GM10248 (cell line): ENCODE measurements at regions of chr3 and their contacts with region 1.

Region 1: DNA sequence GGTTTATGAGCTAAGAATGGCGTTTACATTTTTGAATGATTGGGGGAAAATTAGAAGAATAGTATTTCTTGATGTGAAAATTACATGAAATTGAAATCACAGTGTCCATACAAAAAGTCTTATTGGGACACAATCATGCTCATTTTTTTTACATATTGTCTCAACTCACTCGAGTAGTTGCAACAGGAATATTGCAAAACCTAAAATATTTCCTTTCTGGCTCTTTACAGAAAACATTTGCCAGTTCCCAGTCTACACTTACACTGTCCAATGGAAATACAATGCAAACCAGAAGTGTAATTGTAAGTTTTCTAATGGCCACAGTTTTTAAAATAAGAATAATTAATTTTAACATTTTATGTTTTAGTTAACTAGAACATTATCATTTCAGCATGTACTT is 137.8 kb downstream of the SAMMSON start:
- DNase-seq: no peak
- CTCF ChIP-seq: no peak

Region 2: DNA sequence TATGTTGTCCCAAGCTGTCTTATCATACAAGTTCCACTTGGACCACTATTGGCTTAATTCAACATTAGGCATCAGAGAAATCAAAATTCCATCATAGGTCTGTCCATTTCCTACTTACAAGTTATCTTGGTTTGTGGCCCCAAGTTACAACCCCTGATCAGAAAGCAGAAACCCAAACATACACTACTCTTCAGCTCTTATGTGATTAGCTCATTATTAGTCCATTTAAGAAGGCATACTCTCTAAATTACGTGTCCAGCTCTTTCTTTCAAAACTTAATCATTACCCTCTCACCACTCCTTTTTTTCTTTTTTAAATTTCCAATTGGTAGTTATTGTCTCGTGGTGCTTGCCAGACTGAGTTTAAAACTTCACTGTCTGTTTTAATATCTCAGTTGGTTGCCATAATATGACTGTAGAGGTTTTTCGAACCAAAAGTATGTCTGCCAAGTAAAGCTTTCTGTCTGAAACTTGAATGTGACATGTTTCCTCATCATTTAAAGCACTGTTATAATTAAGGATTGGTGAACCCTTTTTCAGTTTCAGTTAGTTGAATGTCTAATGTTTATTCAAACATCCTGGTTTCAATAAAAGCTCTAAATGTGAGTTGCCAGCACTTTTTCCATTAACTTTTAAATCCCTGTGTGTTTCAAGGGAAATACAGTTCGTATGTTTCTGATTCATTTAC is 12.5 kb after region 1 on chr3:
- CTCF ChIA-PET with region 1: interaction called, 12 read pairs
- POLR2A ChIA-PET with region 1: no interaction called
- DNase-seq: no peak
- CTCF ChIP-seq: no peak